ENCODE measurements at regions of chrX and their contacts with region 1.

Region 1: DNA sequence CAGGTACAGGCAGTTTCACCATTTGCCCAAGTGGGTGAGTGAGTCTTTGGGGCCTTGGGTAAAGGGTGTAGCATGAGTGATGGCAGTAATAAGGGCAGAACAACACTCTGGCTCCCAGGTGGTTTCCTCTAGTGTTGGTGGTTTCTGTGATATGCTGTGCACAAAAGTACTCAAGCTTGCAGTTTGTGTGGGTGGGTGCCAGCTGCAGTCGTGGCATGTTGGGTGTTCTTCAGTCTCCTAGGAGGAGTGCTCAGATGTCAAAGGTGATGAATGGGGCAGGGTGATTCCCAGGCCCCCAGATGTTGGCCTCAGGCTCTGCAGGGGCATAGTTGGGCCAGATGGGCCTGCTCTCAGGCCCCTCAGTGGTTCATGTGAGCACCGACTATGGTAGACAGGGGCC is 166.1 kb upstream of the KLF8 start:
- DNase-seq: peak; percentile 73
- ATAC-seq: peak; percentile 60
- H3K4me3 ChIP-seq: no peak overlapping the region
- H3K4me3 Mint-ChIP-seq: peak overlapping the region; percentile 46
- H3K27ac ChIP-seq: peak overlapping the region; percentile 81 to 99
- H3K27ac Mint-ChIP-seq: peak overlapping the region; percentile 91
- H3K4me1 ChIP-seq: peaks cover 50 to 53% of the 10 kb centered on the region in 2 donors
- H3K4me1 Mint-ChIP-seq: peaks cover 76% of the 10 kb centered on the region
- H3K27me3 ChIP-seq: no peaks in the 10 kb centered on the region
- H3K27me3 Mint-ChIP-seq: no peaks in the 10 kb centered on the region
- CTCF ChIP-seq: no peak

Region 2: DNA sequence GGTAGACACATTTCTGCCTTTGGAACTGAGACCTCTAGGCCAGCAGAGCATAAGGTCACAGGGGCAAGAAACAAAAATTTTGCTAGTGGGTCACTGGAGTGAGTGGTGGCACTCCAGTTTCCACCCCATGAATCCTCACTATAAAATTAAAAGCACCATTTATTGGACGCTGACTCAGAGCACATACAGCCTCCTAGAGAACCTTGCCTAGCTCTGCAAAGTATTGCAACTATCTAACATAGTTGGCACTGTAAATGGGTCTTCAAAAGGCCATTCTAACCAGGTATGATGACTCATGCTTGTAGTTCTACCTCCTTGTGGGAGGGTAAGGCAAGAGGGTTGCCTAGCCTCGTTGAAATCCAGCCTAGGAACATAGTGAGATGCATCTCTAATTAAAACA is 323.4 kb before region 1 on chrX:
- CTCF ChIA-PET with region 1: no interaction called
- POLR2A ChIA-PET with region 1: no interaction called
- intact Hi-C with region 1: no loop called
- DNase-seq: no peak
- ATAC-seq: no peak
- H3K4me3 ChIP-seq: no peak overlapping the region
- H3K4me3 Mint-ChIP-seq: no peak overlapping the region
- H3K27ac ChIP-seq: no peak overlapping the region
- H3K27ac Mint-ChIP-seq: no peak overlapping the region
- H3K4me1 ChIP-seq: no peaks in the 10 kb centered on the region
- H3K4me1 Mint-ChIP-seq: no peaks in the 10 kb centered on the region
- H3K27me3 ChIP-seq: no peaks in the 10 kb centered on the region
- H3K27me3 Mint-ChIP-seq: no peaks in the 10 kb centered on the region
- CTCF ChIP-seq: no peak

Region 3: DNA sequence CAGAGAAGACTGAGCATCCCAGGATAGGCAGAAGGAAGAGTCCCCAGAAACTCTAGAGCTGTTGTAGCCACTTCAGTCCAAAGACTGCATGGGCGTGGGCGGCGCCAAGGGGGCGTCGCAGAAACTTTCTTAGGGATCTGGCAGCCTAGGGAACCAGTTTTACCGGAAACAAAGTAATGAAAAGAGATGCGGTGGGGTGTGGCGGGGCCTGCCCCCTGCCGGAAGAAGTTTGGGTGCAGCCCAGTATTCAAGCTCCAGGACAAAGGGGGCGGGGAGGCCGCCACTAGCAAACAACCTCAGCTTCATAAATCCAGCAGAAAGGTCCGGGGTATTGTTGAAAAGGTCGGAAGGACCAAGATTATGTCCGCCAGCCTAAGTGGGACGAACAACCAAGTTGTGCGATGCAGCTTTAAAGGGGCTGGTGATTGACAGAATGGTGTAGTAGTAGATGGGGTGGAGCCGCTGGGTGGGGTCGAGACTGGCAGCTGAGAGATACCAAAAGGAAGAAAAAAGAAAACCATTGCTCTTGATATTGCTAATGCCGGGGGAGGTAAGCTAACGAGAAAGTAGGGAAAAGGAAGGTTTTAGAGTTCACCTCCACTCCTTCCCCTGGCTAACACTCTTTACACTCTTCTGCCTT is 157.9 kb before region 1 on chrX:
- CTCF ChIA-PET with region 1: interaction called, 24 read pairs
- POLR2A ChIA-PET with region 1: interaction called, 14 read pairs
- intact Hi-C with region 1: loop called (anchors 2 kb)
- DNase-seq: peak; percentile 65
- ATAC-seq: peak; percentile 77
- H3K4me3 ChIP-seq: peak overlapping the region; percentile 65 to 71 (median 68)
- H3K4me3 Mint-ChIP-seq: peak overlapping the region; percentile 98
- H3K27ac ChIP-seq: peak overlapping the region; percentile 57 to 61
- H3K27ac Mint-ChIP-seq: peak overlapping the region; percentile 96
- H3K4me1 ChIP-seq: peaks cover 13 to 18% of the 10 kb centered on the region in 2 donors
- H3K4me1 Mint-ChIP-seq: peaks cover 32% of the 10 kb centered on the region
- H3K27me3 ChIP-seq: no peaks in the 10 kb centered on the region
- H3K27me3 Mint-ChIP-seq: no peaks in the 10 kb centered on the region
- CTCF ChIP-seq: peak; percentile 57

Region 4: DNA sequence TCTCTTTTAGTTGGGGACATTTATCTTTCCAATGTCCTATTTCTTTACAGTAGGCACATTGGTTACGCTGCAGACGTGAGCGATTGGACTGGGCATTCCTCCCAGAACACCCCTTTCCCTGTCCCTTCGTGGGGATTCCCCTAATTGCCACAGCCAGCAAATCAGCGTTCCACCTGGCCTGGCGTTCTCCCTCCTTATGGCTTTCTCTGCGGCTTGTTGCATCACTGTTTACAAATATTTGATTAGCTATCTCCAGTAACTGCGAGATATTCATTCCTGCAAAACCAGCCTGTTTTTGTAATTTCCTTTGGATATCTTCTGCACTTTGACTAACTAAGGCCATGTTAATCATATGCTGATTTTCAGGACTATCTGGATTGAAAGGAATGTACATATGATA is 36.3 kb before region 1 on chrX:
- CTCF ChIA-PET with region 1: interaction called, 3 read pairs
- POLR2A ChIA-PET with region 1: no interaction called
- intact Hi-C with region 1: loop called (anchors 5 kb)
- DNase-seq: no peak
- ATAC-seq: no peak
- H3K4me3 ChIP-seq: no peak overlapping the region
- H3K4me3 Mint-ChIP-seq: no peak overlapping the region
- H3K27ac ChIP-seq: no peak overlapping the region
- H3K27ac Mint-ChIP-seq: no peak overlapping the region
- H3K4me1 ChIP-seq: peaks cover 5 to 14% of the 10 kb centered on the region in 2 donors
- H3K4me1 Mint-ChIP-seq: peaks cover 36% of the 10 kb centered on the region
- H3K27me3 ChIP-seq: no peaks in the 10 kb centered on the region
- H3K27me3 Mint-ChIP-seq: no peaks in the 10 kb centered on the region
- CTCF ChIP-seq: no peak

Region 5: GRCh38 chrX:56232221-56233082 is 166.4 kb after region 1 on chrX and contains the start of gene KLF8:
- CTCF ChIA-PET with region 1: interaction called, 10 read pairs
- POLR2A ChIA-PET with region 1: interaction called, 22 read pairs
- intact Hi-C with region 1: loop called (anchors 2 kb)
- DNase-seq: peak; percentile 64
- ATAC-seq: peak; percentile 80
- H3K4me3 ChIP-seq: peak within 1 kb of the TSS; percentile 11 to 76 (median 58)
- H3K4me3 Mint-ChIP-seq: peak within 1 kb of the TSS; percentile 88
- H3K27ac ChIP-seq: peak within 1 kb of the TSS; percentile 50 to 64
- H3K27ac Mint-ChIP-seq: peak within 1 kb of the TSS; percentile 90
- H3K4me1 ChIP-seq: peaks cover 19 to 25% of the 10 kb centered on the region in 2 donors
- H3K4me1 Mint-ChIP-seq: peaks cover 37% of the 10 kb centered on the region
- H3K27me3 ChIP-seq: no peaks in the 10 kb centered on the region
- H3K27me3 Mint-ChIP-seq: no peaks in the 10 kb centered on the region
- CTCF ChIP-seq: no peak
- total RNA-seq, gene KLF8: 42.7 and 43.1 TPM in 2 replicates